CD8-positive, alpha-beta memory T cell (primary cell): ENCODE measurements at regions of chr5 and their contacts with region 1.

Region 1: DNA sequence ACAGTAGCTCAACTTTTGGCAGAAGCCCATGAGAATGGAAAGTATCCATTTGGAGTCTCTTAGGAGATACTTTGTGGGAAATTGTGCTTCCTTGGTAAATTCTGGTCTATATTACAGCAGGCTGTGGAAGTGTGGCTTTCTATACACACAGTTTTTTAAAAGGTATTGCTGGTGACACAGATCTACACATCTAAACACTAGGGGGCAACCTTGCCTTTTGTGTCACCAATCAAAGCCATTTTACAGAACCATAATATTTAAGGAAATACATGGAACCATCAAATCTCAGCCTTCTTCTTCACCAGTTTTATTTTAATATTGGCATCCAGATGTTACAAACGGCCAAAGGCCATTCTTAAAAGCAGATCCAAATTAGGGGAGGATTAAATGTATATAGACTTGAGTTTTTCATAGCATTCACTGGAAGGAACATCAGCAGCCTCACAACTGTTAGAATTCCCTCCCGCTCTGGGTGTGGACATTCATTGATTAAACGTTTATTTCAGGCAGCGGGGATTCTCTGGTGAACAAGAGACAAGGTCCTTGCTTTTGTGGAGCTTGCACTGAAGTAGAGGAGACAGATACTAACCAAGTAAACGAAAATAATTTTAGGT is 132.4 kb upstream of the EPB41L4A start:
- DNase-seq: peak in 3 of 5 donors; percentile 8 to 47 (median 37)
- H3K4me3 ChIP-seq: no peak overlapping the region
- H3K4me3 Mint-ChIP-seq: no peak overlapping the region
- H3K27ac ChIP-seq: no peak overlapping the region
- H3K27ac Mint-ChIP-seq: no peak overlapping the region
- H3K4me1 ChIP-seq: no peaks in the 10 kb centered on the region
- H3K4me1 Mint-ChIP-seq: peaks cover 0 to 10% (median 0%) of the 10 kb centered on the region in 3 donors
- H3K27me3 ChIP-seq: no peaks in the 10 kb centered on the region
- H3K27me3 Mint-ChIP-seq: peaks cover 3 to 8% of the 10 kb centered on the region in 2 donors

Region 2: DNA sequence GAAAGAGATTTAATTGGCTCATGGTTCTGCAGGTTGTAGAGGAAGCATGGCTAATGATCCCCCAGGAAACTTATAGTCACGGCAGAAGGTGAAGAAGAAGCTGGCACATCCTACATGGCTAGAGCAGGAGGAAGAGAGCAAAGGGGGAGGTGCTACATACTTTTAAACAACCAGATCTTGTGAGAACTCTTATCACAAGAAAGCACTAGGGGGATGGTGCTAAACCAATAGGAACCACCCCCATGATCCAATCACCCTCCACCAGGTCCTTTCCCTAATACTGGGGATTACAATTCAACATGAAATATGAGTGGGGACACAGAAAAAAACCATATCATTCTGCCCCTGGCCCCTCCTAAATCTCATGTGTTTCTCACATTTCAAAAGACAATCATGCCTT is 14.7 kb after region 1 on chr5:
- CTCF ChIA-PET with region 1: no interaction called
- POLR2A ChIA-PET with region 1: no interaction called
- DNase-seq: no peak
- H3K4me3 ChIP-seq: no peak overlapping the region
- H3K4me3 Mint-ChIP-seq: no peak overlapping the region
- H3K27ac ChIP-seq: no peak overlapping the region
- H3K27ac Mint-ChIP-seq: no peak overlapping the region
- H3K4me1 ChIP-seq: no peaks in the 10 kb centered on the region
- H3K4me1 Mint-ChIP-seq: no peaks in the 10 kb centered on the region
- H3K27me3 ChIP-seq: no peaks in the 10 kb centered on the region
- H3K27me3 Mint-ChIP-seq: peaks cover 6 to 10% of the 10 kb centered on the region in 2 donors

Region 3: DNA sequence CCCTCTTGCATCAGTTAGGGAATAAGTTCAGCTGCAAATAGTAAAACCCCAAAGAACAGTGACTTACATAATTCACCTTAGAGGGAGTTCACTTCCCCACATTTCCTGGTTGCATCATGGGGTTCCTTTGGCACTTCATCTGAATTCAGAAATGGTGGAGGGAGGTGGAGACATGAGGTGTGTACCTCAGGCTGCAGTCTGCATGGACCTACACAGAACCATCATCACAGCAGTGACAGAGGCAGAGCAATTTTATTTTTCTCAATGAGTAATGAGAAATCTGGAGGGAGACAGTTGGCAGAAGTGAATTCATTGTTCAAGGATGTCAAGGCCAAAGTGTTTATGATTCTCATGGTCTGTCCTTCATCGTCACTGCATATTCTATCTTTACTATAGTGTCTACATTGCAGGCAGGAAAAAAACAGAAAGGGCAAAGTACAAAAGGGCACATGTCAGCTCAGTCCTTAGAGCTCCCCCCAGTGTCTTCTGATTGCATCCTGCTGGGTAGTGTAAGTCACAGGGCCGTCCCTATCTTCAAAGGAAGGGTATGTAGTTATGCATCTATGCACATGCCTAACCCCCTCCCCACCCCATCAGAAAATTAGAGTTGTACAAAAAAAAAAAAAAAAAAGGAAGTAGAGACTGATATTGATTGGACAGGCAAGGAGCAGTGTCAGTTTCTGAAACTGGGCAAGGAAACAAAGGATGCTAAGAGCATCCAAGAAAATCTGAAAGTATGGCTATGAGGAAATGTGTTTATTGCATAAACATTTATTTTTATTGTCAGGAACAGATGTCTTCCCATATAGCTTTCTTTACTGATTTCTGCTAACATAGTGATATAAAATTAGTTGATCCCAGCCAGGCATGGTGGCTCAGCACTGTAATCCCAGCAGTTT is 53.5 kb after region 1 on chr5:
- CTCF ChIA-PET with region 1: interaction called, 10 read pairs
- POLR2A ChIA-PET with region 1: no interaction called
- DNase-seq: no peak
- H3K4me3 ChIP-seq: no peak overlapping the region
- H3K4me3 Mint-ChIP-seq: peak overlapping the region in 1 of 7 donors; percentile 10
- H3K27ac ChIP-seq: no peak overlapping the region
- H3K27ac Mint-ChIP-seq: no peak overlapping the region
- H3K4me1 ChIP-seq: no peaks in the 10 kb centered on the region
- H3K4me1 Mint-ChIP-seq: peaks cover 0 to 15% (median 7%) of the 10 kb centered on the region in 3 donors
- H3K27me3 ChIP-seq: no peaks in the 10 kb centered on the region
- H3K27me3 Mint-ChIP-seq: peaks cover 6 to 20% of the 10 kb centered on the region in 2 donors